Caco-2 (cell line): ENCODE measurements at regions of chr3 and their contacts with region 1.

Region 1: DNA sequence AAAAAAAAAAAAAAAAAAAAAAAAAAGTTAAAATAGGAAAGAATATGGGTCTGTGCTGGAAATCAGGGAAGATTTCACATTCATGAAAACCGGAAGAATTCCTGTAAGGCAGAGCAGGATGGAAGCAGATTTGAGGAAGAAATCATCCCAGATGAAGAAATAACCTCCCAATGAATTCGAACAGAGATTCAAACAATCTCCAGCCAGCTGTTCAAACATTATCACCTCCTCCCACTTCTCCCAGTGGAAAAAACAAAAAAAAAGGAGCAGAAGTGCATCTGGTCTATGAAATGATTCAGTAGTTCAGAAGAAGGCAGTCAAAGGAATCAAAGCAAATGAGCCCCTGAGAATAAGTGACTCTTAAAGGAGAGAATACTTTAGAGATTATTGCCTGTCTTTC is 33.1 kb downstream of the CP start:
- DNase-seq: no peak
- H3K4me3 ChIP-seq: no peak overlapping the region
- H3K4me3 Mint-ChIP-seq: no peak overlapping the region
- H3K27ac Mint-ChIP-seq: no peak overlapping the region
- H3K4me1 ChIP-seq: peaks cover 21% of the 10 kb centered on the region
- H3K4me1 Mint-ChIP-seq: peaks cover 15% of the 10 kb centered on the region
- H3K27me3 ChIP-seq: no peaks in the 10 kb centered on the region
- H3K27me3 Mint-ChIP-seq: no peaks in the 10 kb centered on the region
- CTCF ChIP-seq: no peak

Region 2: GRCh38 chr3:149104516-149104915 is 84.0 kb before region 1 on chr3:
- CTCF ChIA-PET with region 1: no interaction called
- POLR2A ChIA-PET with region 1: no interaction called
- intact Hi-C with region 1: no loop called
- DNase-seq: no peak
- H3K4me3 ChIP-seq: no peak overlapping the region
- H3K4me3 Mint-ChIP-seq: no peak overlapping the region
- H3K27ac Mint-ChIP-seq: no peak overlapping the region
- H3K4me1 ChIP-seq: 0 out of 2 replicates have a peak, but pooled peaks cover 3% of the 10 kb centered on the region
- H3K4me1 Mint-ChIP-seq: no peaks in the 10 kb centered on the region
- H3K27me3 ChIP-seq: no peaks in the 10 kb centered on the region
- H3K27me3 Mint-ChIP-seq: no peaks in the 10 kb centered on the region
- CTCF ChIP-seq: no peak

Region 3: DNA sequence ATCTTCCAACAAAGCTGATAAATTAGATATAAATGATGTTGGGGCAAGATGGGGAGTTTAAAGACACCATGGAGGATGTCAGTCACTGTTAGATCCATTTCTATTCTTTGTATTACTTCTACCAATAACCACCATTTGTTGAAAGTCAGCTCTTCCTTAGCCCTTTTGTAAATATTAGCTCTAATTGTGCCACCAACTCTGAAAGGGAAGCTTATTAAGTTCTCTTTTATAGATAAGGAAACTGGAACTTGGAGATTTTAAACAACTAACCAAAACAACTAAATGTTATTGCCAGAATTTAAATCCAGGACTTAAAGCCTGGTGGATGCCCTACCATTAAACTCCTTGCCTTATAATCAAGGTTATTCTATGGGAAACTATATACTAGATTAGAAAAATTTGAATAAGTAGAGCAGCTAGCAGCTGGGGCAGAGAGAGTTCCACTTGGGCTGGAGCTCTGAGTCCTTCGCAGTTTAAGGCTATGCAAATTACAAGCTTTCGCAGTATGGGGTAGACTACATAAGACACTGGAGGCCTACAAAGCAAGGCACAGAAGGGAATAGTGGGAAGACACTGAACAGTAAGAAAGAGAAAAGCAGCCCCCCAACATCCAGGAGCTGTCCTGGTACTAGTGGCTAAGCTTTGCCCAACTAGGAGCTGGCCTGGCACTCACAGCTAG is 92.3 kb after region 1 on chr3:
- CTCF ChIA-PET with region 1: interaction called, 11 read pairs
- POLR2A ChIA-PET with region 1: no interaction called
- intact Hi-C with region 1: no loop called
- DNase-seq: no peak
- H3K4me3 ChIP-seq: no peak overlapping the region
- H3K4me3 Mint-ChIP-seq: no peak overlapping the region
- H3K27ac Mint-ChIP-seq: no peak overlapping the region
- H3K4me1 ChIP-seq: peaks cover 22% of the 10 kb centered on the region
- H3K4me1 Mint-ChIP-seq: peaks cover 22% of the 10 kb centered on the region
- H3K27me3 ChIP-seq: no peaks in the 10 kb centered on the region
- H3K27me3 Mint-ChIP-seq: no peaks in the 10 kb centered on the region
- CTCF ChIP-seq: no peak